ENCODE measurements at regions of chr22 and their contacts with region 1.

Region 1: DNA sequence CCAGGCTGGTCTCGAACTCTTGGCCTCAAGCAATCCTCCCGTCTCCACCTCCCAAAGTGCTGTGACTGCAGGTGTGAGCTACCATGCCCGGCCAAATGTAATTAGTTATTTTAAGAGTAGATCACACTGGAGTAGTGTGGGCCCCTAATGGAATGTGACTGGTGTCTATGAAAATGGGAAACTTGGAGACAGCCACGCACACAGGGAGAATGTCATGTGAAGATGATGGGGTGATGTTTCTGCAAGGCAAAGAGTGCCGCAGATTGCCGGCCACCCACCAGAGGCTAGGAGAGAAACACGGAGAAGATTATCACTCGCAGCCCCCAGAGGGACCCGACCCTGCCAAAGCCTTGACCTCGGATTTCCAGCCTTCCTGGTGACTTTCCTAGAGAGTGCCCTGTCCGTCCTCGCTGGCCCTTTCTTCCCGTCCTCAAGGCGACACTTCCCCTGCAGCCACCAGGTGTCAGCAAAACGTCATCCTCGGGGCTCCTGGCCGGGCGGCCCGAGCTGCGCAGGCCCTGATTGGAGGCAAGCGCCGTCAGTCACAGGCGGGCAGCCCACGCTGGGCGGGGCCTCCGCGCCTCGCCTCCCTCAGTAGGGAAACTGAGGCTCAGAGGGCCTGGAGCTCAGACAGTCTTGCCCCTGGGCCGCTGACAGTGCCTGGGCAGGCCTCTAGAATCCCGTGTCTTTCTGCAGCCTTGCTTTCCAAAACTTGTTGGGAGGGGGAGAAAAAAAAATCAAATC is 16.3 kb downstream of the CRYBB2 start:
- DNase-seq: peak; percentile 90
- ATAC-seq: peak; percentile 95
- H3K4me3 Mint-ChIP-seq: no peak overlapping the region
- H3K27ac Mint-ChIP-seq: no peak overlapping the region
- H3K4me1 Mint-ChIP-seq: peaks cover 5% of the 10 kb centered on the region
- H3K27me3 Mint-ChIP-seq: peaks cover 41% of the 10 kb centered on the region

Region 2: DNA sequence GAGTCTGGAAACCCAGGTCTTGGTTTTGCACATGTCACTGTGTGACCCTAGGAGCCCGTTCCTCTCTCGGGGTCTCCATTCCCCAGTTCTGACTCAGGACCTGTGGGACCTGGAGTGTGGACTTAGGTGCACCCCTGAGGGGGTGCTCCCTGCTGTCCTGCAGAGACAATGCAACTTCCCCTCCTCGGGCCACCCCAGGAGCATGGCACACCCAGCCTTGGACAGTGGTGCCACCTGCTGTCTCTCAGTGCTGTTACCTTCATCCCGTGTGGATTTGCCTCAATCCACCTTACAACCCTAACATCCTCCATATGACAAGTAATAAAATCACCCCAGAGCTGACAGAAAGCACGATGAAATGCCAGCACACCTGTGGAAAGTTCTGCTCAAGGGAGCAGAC is 63.6 kb before region 1 on chr22:
- CTCF ChIA-PET with region 1: no interaction called
- POLR2A ChIA-PET with region 1: no interaction called
- intact Hi-C with region 1: no loop called
- DNase-seq: peak; percentile 71
- ATAC-seq: peak; percentile 83
- H3K4me3 Mint-ChIP-seq: no peak overlapping the region
- H3K27ac Mint-ChIP-seq: no peak overlapping the region
- H3K4me1 Mint-ChIP-seq: no peaks in the 10 kb centered on the region
- H3K27me3 Mint-ChIP-seq: no peaks in the 10 kb centered on the region

Region 3: DNA sequence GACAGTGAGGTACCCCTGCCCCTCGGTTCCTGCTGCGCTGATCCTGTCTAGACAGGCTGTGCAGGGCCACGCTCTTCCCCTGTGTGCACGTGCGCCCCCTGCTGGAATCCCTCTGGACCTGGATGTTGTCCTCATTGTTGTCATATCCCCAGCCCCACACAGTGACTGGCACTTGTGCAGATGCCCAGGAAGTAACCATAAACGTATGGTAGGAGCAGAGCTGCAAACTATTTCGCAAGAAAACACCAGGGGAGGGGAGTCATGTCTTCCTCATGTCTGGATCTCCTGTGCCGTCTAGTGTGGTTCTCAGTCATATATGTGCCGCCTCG is 98.4 kb after region 1 on chr22:
- CTCF ChIA-PET with region 1: no interaction called
- POLR2A ChIA-PET with region 1: no interaction called
- intact Hi-C with region 1: loop called (anchors 1 to 5 kb)
- DNase-seq: peak; percentile 85
- ATAC-seq: peak; percentile 90
- H3K4me3 Mint-ChIP-seq: no peak overlapping the region
- H3K27ac Mint-ChIP-seq: no peak overlapping the region
- H3K4me1 Mint-ChIP-seq: no peaks in the 10 kb centered on the region
- H3K27me3 Mint-ChIP-seq: no peaks in the 10 kb centered on the region

Region 4: GRCh38 chr22:25772288-25772687 is 536.6 kb after region 1 on chr22:
- CTCF ChIA-PET with region 1: interaction called, 3 read pairs
- POLR2A ChIA-PET with region 1: no interaction called
- intact Hi-C with region 1: loop called (anchors 2 to 5 kb)
- DNase-seq: no peak
- ATAC-seq: no peak
- H3K4me3 Mint-ChIP-seq: no peak overlapping the region
- H3K27ac Mint-ChIP-seq: no peak overlapping the region
- H3K4me1 Mint-ChIP-seq: peaks cover 12% of the 10 kb centered on the region
- H3K27me3 Mint-ChIP-seq: peaks cover 2% of the 10 kb centered on the region

Region 5: GRCh38 chr22:25777870-25778269 is 542.2 kb after region 1 on chr22:
- CTCF ChIA-PET with region 1: no interaction called
- POLR2A ChIA-PET with region 1: no interaction called
- intact Hi-C with region 1: loop called (anchors 2 to 5 kb)
- DNase-seq: peak; percentile 16
- ATAC-seq: no peak
- H3K4me3 Mint-ChIP-seq: no peak overlapping the region
- H3K27ac Mint-ChIP-seq: no peak overlapping the region
- H3K4me1 Mint-ChIP-seq: peaks cover under 1% of the 10 kb centered on the region
- H3K27me3 Mint-ChIP-seq: peaks cover 2% of the 10 kb centered on the region

Measured in activated CD4-positive, alpha-beta T cell treated with anti-CD3 and anti-CD28 coated beads for 36 hours (primary cell).